Right ventricle myocardium superior (tissue), 1 donor: ENCODE measurements at regions of chrX and their contacts with region 1.

Region 1: GRCh38 chrX:41116948-41117347 is 31.7 kb downstream of the USP9X start:
- DNase-seq: no peak
- ATAC-seq: peak; percentile 36

Region 2: DNA sequence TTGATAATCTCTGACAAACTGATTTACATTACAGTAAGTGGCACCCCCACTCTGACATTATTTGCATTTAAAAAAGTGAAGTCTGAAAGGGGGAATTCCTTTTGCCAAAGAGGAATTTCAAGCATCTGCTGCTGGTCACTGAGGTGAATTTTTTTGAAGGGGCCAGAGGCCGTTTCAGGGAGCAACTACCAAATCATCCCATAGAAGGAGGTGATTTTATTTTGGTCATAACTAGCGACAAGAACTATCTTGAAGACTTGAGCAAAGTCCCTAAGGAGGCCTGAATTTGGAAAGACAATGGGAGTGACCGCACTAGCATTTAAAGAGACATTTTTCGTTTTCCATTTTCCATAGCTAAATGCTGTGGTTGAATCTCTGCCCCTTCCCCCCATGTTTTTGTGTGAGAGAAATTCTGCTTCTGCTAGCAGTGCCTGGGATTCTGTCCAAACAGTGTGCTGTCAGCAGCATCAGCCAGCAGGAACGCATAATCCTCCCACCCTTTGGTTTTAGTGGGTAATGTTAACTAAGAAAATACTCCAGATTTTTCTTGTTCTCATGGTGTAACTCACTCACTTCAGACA is 271.5 kb before region 1 on chrX:
- intact Hi-C with region 1: no loop called
- DNase-seq: peak; percentile 44
- ATAC-seq: peak; percentile 80

Region 3: DNA sequence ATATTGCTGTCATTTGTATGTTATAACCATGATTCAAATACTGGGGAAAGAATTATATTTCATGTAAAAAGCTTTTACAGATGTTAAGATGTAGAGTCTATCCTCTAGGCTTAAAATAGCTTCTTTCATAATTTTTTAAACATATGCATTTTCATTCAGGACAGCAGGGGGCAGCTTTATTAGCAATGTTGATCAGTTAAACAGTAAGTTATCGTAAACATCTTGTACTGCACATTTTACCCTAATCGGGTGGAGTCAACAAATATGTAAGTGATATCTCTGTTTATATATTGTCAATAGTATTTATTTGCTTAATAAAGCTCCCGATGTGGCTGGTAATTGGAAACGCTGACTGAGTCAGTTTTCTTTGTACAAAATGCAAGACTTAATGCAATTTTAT is 239.1 kb before region 1 on chrX:
- intact Hi-C with region 1: loop called (anchors 10 kb)
- DNase-seq: no peak
- ATAC-seq: no peak

Region 4: DNA sequence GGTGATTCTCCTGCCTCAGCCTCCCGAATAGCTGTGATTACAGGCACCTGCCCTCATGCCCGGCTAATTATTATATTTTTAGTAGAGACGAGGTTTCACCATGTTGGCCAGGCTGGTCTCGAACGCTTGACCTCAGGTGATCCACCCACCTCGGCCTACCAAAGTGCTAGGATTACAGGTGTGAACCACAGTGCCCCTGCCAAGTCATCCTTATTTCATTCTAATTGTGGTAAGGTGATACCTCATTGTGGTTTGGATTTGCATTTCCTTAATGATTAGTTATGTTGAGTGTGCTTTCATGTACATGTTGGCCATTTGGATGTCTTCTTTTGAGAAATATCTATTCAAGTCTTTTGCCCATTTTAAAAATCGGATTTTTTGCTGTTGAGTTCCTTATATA is 61.3 kb after region 1 on chrX:
- intact Hi-C with region 1: no loop called
- DNase-seq: no peak
- ATAC-seq: no peak